ENCODE measurements at regions of chr13 and their contacts with region 1.

Region 1: DNA sequence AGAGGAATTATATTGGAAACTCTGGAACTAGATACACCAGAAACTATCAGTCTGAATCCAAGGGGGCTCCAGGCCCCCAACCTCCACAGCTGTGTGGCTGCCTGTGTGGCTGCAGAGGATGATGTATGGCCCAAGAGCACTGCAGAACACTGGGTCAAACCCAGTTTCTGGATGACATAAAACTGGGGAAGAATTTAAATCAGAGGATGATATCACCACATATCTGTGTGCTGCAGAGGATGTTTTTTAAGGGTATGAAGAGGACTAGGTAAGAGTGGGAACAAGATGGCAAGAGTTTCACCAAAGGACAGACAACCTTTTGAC is 226.4 kb downstream of the SUCLA2 start:
- DNase-seq: no peak
- ATAC-seq: no peak
- H3K4me3 ChIP-seq: no peak overlapping the region
- H3K27ac ChIP-seq: no peak overlapping the region
- H3K4me1 ChIP-seq: no peaks in the 10 kb centered on the region
- H3K27me3 ChIP-seq: no peaks in the 10 kb centered on the region; a peak in 1 of 5 replicates
- CTCF ChIP-seq: no peak
- EP300 ChIP-seq: no peak
- POLR2A ChIP-seq: no peak
- RAD21 ChIP-seq: no peak

Region 2: GRCh38 chr13:46831588-46832194 is 942.9 kb before region 1 on chr13:
- CTCF ChIA-PET with region 1: interaction called, 3 read pairs
- POLR2A ChIA-PET with region 1: no interaction called
- in situ Hi-C with region 1: no loop called
- intact Hi-C with region 1: loop called (anchors 2 kb)
- DNase-seq: peak; percentile 10 to 57 (median 27)
- ATAC-seq: peak; percentile 79
- H3K4me3 ChIP-seq: no peak overlapping the region
- H3K27ac ChIP-seq: no peak overlapping the region
- H3K4me1 ChIP-seq: no peaks in the 10 kb centered on the region
- H3K27me3 ChIP-seq: peaks cover 0 to 4% of the 10 kb centered on the region in 2 experiments; a peak in 1 of 5 replicates
- CTCF ChIP-seq: peak; percentile 49 to 74 (median 56); a peak in 4 of 6 replicates
- EP300 ChIP-seq: no peak
- POLR2A ChIP-seq: no peak
- RAD21 ChIP-seq: peak; percentile 78 to 85

Region 3: DNA sequence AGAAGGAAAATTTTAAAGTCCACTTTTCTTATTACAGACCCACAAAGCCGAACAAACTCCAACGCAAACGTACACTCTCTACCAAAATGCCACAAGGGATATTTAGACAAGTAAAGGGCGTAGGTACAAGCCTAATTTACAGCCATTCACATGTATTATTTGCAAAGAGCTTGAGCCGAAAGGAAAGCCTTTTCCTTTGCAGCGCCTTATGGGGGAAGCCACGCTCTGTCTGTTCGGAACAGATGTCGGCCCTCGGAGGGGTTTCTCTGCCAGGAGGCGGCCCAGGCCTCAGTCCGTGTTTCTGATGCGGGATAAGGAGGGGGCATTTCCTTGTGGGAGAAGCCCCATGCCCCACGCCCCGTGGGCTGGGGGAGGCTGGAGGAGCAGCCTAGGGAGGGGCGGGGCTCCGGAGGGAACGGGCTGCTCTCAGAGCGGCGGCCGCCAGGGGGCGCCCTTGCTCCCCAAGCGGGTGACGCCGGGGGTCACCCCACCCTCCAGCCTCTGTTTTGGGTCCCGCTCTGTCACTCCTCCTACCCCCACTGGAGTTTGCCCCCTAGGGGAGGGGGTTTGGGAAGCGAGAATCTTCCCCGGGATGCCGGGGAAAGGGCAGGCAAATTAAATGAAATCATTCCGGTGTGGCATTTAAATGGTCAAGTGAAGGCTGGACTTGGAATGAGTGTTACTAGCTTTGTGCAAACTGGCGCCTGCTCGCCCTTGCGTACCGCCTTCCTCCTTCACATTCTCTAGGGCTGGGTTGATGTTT is 880.7 kb before region 1 on chr13:
- CTCF ChIA-PET with region 1: interaction called, 4 read pairs
- POLR2A ChIA-PET with region 1: no interaction called
- in situ Hi-C with region 1: no loop called
- intact Hi-C with region 1: loop called (anchors 10 kb)
- DNase-seq: peak; percentile 65 to 84 (median 80)
- ATAC-seq: peak; percentile 100
- H3K4me3 ChIP-seq: peak overlapping the region; percentile 29
- H3K27ac ChIP-seq: no peak overlapping the region
- H3K4me1 ChIP-seq: peaks cover 0 to 6% of the 10 kb centered on the region in 2 experiments; a peak in 2 of 5 replicates
- H3K27me3 ChIP-seq: peaks cover 3 to 5% of the 10 kb centered on the region in 2 experiments; a peak in 3 of 5 replicates
- CTCF ChIP-seq: peak; percentile 63 to 79 (median 65)
- EP300 ChIP-seq: no peak
- POLR2A ChIP-seq: no peak
- RAD21 ChIP-seq: peak; percentile 32 to 60; a peak in 3 of 4 replicates

Region 4: DNA sequence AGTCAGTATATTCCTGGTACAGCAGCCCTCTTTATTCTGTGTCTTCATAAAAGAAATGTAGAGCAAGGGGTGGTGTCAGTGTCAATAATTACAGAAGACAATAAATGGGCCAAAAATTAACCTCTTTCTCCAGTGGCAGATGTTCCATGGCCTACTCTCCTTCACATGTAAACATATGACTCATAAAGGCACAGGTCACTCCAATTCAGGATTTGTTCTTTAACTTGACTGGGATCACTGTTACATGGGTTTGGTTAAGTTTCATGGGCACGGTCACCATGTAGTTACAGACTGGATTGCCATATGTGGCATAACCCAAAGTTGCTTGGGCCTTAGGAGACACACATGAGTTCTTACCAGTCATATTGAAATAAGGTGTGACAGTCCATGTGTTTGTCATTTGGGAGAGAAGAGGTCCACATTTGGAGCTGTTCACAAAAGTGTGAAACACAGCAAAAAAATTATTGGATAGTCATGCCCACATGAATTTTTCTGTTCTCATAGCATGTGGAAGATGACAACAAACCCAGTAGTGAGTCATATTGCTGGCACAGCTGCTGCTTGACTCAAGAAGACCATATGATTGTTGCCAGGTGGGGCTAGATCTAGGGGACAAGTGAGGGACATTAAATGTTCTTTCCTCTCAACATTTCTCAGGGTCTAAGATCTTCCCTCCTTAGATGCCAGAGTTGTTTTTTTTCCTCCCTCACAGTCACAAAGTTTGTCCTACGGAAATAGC is 809.7 kb before region 1 on chr13:
- CTCF ChIA-PET with region 1: no interaction called
- POLR2A ChIA-PET with region 1: no interaction called
- in situ Hi-C with region 1: no loop called
- intact Hi-C with region 1: loop called (anchors 5 kb)
- DNase-seq: no peak
- ATAC-seq: no peak
- H3K4me3 ChIP-seq: no peak overlapping the region
- H3K27ac ChIP-seq: no peak overlapping the region
- H3K4me1 ChIP-seq: no peaks in the 10 kb centered on the region
- H3K27me3 ChIP-seq: no peaks in the 10 kb centered on the region
- CTCF ChIP-seq: no peak
- EP300 ChIP-seq: no peak
- POLR2A ChIP-seq: no peak
- RAD21 ChIP-seq: no peak

Region 5: GRCh38 chr13:47549219-47549752 is 225.3 kb before region 1 on chr13:
- CTCF ChIA-PET with region 1: no interaction called
- POLR2A ChIA-PET with region 1: no interaction called
- in situ Hi-C with region 1: no loop called
- intact Hi-C with region 1: no loop called
- DNase-seq: peak in 1 of 4 experiments; percentile 0
- ATAC-seq: no peak
- H3K4me3 ChIP-seq: no peak overlapping the region
- H3K27ac ChIP-seq: no peak overlapping the region
- H3K4me1 ChIP-seq: no peaks in the 10 kb centered on the region
- H3K27me3 ChIP-seq: no peaks in the 10 kb centered on the region
- CTCF ChIP-seq: no peak
- EP300 ChIP-seq: no peak
- POLR2A ChIP-seq: no peak
- RAD21 ChIP-seq: no peak

Region 6: GRCh38 chr13:47708386-47708785 is 66.2 kb before region 1 on chr13:
- CTCF ChIA-PET with region 1: no interaction called
- POLR2A ChIA-PET with region 1: no interaction called
- in situ Hi-C with region 1: no loop called
- intact Hi-C with region 1: no loop called
- DNase-seq: no peak
- ATAC-seq: no peak
- H3K4me3 ChIP-seq: no peak overlapping the region
- H3K27ac ChIP-seq: no peak overlapping the region
- H3K4me1 ChIP-seq: no peaks in the 10 kb centered on the region
- H3K27me3 ChIP-seq: no peaks in the 10 kb centered on the region
- CTCF ChIP-seq: no peak
- EP300 ChIP-seq: no peak
- POLR2A ChIP-seq: no peak
- RAD21 ChIP-seq: no peak